Ascending aorta (tissue), 2 donors: ENCODE measurements at regions of chr3 and their contacts with region 1.

Region 1: DNA sequence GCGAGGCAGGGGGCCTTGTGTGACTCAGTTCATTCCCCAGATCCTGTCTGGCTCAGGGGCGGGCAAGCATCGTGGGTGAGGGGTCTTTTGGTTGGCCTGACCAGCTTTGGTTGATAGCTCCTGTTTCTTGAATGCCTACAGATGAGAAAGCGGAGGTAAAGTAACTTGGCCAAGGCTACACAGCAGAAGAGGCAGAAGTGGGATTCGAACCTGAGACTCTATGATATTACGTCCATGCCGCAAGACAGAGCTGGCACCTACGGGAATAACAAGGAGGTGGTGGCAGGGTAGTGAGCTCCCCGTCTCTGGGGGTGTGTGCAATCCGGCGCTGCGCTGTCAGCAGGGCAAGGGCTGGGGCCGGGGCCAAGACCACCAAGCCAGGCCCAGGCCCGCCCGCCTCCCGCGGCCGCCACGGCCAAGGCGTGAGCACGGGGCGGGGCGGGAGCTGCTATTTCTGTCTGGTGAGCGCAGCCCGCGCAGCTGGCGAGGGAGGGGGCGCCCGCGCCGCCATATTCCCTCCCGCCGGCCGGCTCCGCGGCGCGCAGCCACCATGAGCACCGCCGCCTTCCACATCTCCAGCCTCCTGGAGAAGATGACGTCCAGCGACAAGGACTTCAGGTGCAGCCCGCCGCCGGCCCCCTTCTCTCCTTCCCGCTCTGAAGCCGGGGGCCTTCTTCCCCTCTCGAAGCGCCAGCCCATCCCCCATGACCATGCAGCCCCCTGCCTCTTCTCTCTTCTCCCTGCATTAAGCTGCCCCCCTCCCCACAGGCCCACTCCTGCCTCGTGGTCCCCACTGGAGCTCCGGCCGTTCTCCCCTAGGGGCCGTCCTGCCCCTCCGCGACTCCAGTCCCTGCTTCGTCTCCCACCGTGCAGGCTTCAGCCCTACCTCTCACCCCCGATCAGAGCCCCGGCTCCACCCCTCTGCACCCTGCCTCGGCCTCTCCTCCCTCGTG is at the start of gene CAND2:
- DNase-seq: peak; percentile 35 to 85
- H3K4me3 ChIP-seq: peak within 1 kb of the TSS; percentile 60 to 73
- H3K27ac ChIP-seq: peak within 1 kb of the TSS; percentile 93 to 95
- H3K4me1 ChIP-seq: peaks cover 3 to 13% of the 10 kb centered on the region in 2 donors
- H3K27me3 ChIP-seq: no peaks in the 10 kb centered on the region
- CTCF ChIP-seq: peak in 1 of 3 experiments; percentile 13
- total RNA-seq, gene CAND2: 14.4 TPM

Region 2: DNA sequence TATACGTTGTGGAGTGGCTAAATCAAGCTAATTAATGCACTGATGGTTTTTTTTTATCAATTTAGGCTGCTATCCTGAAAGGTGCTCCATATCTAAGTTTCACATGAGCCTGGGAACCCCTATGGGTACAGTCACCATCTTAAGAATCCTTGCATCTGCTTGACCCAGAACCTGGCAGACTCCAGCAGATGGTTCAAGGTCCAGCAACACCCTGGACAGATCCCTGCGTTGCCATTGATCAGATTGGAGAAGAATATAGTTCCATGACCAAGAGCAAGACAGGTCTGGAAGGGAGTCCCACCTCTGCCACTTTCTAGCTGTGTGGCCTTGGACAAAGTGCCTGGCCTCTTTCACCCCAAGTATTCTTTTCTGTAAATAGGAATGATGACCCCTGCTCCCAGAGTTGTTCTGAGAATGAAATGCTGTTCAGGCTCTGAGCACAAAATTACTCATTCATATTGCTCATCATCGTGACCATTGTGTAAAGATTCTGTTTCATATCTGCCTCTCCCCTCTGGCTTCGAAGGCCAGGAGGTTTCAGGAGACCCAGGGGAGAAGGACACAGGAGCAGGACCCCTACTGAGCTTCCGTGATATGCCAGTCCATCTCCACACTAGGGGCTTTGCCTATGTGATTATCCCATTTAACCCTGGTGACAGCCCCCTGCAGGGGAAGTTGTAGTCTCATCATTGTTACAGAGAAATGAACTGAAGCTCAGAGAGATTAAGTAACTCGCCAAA is 342.2 kb before region 1 on chr3:
- intact Hi-C with region 1: no loop called
- DNase-seq: no peak
- H3K4me3 ChIP-seq: no peak overlapping the region
- H3K27ac ChIP-seq: no peak overlapping the region
- H3K4me1 ChIP-seq: no peaks in the 10 kb centered on the region
- H3K27me3 ChIP-seq: no peaks in the 10 kb centered on the region
- CTCF ChIP-seq: no peak

Region 3: GRCh38 chr3:12556671-12557472 is 239.6 kb before region 1 on chr3 and contains the start of gene MKRN2:
- intact Hi-C with region 1: loop called (anchors 5 kb)
- DNase-seq: peak; percentile 33 to 92
- H3K4me3 ChIP-seq: peak within 1 kb of the TSS; percentile 61 to 99
- H3K27ac ChIP-seq: peak within 1 kb of the TSS; percentile 92 to 98
- H3K4me1 ChIP-seq: peaks cover 6 to 32% of the 10 kb centered on the region in 2 donors
- H3K27me3 ChIP-seq: no peaks in the 10 kb centered on the region
- CTCF ChIP-seq: no peak
- total RNA-seq, gene MKRN2: 25.2 TPM

Region 4: DNA sequence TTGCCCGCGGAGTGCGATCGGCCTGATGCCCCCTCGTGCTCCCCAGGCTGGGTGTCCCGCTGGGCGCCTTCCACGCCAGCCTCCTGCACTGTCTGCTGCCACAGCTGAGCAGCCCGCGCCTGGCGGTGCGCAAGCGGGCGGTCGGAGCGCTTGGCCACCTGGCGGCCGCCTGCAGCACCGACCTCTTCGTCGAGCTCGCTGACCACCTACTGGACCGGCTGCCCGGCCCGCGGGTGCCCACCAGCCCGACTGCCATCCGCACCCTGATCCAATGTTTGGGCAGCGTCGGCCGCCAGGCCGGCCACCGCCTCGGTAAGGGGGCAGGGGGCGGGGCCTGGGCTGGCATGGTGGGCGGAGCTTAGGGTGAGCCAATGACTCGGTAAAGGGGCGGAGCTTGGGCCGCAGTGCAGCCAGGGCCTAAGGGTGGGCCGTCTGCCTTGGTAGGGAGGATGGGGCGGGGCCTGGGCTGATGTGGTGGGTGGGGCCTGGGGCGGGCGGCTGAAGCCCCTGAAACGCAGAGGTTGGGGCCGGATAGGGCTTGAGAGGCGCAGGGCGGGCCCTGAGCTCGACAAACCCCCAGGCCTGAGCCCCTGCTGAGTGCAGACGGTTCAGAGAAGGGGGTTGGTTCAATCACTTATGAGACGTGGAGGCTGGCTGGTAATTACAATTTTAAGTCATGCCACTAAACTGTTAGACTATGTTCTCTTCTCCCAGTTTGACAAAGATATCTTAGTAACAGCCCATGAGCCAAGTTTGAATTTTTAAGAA is 13.8 kb after region 1 on chr3:
- intact Hi-C with region 1: loop called (anchors 1 kb)
- DNase-seq: peak; percentile 87 to 98
- H3K4me3 ChIP-seq: peak overlapping the region; percentile 37 to 57
- H3K27ac ChIP-seq: peak overlapping the region; percentile 53 to 77
- H3K4me1 ChIP-seq: peaks cover 0 to 11% of the 10 kb centered on the region in 2 donors
- H3K27me3 ChIP-seq: no peaks in the 10 kb centered on the region
- CTCF ChIP-seq: peak; percentile 76 to 92 (median 85)

Region 5: DNA sequence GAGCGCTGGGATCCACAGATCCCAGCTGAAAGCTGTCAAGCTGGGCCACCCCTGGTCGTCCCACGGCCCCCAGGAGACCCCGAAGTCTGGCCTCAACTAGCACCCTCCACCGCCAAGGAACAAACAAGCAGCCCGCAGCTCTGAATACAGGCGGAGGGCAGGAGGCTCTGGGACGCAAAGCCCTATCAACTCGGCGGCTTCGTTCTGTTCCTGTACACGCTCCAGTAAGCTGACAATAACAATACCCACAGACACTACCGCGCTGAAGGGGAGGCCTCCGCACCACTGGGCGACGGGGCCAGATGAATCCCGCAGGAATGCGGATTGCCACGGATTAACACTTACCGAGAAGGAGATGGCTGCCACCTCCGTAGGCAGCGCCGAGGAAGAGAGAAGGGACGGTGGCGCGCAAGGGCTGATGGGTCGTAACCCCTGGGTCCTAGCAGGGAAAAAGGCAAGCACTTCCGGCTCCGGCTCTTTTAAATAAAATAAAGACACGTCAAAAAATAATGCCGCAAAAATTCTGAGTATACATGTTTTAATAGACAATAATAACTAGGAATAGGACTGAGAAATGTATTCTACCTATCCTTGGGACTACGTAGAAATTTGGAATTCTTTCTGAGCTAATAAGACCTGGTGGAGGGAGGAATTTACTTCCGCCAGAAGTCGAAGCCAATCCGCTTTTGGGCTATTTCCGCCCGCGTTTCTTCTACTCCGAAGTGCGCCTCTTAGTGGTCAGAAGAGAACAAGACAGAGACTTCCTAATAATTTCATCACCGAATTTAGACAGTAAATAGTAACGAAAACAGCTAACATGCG is 44.9 kb after region 1 on chr3 and contains the start of gene RPL32:
- intact Hi-C with region 1: loop called (anchors 2 kb)
- DNase-seq: peak; percentile 31 to 92
- H3K4me3 ChIP-seq: peak within 1 kb of the TSS; percentile 71 to 84
- H3K27ac ChIP-seq: peak within 1 kb of the TSS; percentile 91 to 95
- H3K4me1 ChIP-seq: peaks cover 0 to 19% of the 10 kb centered on the region in 2 donors
- H3K27me3 ChIP-seq: no peaks in the 10 kb centered on the region
- CTCF ChIP-seq: peak; percentile 74 to 82 (median 78)
- total RNA-seq, gene RPL32: 1,821 TPM

Region 6: GRCh38 chr3:12891985-12892839 is 95.8 kb after region 1 on chr3:
- intact Hi-C with region 1: loop called (anchors 5 kb)
- DNase-seq: peak in 1 of 2 donors; percentile 75
- H3K4me3 ChIP-seq: peak overlapping the region in 1 of 2 donors; percentile 53
- H3K27ac ChIP-seq: peak overlapping the region; percentile 48 to 58
- H3K4me1 ChIP-seq: peaks cover 9 to 18% of the 10 kb centered on the region in 2 donors
- H3K27me3 ChIP-seq: no peaks in the 10 kb centered on the region
- CTCF ChIP-seq: peak; percentile 85 to 93 (median 90)

Region 7: DNA sequence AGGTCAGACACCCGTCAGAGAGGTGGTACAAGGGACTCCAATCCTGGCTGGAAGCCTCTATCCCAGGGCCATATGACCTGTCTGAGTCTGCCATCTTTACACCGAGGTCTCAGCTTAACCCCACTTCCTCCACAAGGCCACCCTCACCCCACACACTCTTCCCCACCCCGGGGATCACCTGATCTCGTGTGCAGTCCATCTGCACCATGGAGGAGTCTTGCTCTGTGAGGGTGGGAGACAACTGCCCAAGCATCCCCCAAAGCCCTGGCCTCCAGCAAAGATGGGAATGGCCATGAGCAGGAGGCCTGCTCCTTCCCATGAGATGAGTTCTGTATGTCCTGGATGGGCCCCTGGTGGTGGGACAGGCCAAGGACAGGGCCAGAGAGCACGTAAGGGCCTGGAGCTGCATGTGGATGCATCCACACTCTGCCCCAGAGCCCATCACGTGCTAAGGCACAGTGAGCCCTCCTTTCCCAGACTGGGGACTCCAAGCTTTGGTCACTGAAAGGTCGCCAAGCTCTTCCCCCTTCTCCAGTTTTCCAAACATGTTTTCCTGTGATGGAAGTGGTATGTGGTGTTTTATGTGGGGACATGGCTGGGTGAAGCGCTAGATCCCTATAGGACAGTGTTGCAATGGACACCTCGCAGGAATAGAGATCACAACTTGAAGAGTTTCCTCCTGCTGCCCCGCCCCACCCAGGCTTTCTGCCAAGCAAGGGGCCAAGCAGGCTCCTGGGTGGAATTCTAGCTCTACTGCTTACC is 151.0 kb after region 1 on chr3:
- intact Hi-C with region 1: no loop called
- DNase-seq: no peak
- H3K4me3 ChIP-seq: peak overlapping the region in 1 of 2 donors; percentile 13
- H3K27ac ChIP-seq: peak overlapping the region; percentile 80 to 92
- H3K4me1 ChIP-seq: peaks cover 42 to 81% of the 10 kb centered on the region in 2 donors
- H3K27me3 ChIP-seq: no peaks in the 10 kb centered on the region
- CTCF ChIP-seq: peak in 1 of 3 experiments; percentile 10